Tibial artery (tissue), 4 donors: ENCODE measurements at regions of chr10 and their contacts with region 1.

Region 1: GRCh38 chr10:119207367-119207668 is at the start of gene GRK5:
- DNase-seq: peak; percentile 97 to 98
- H3K4me3 ChIP-seq: peak within 1 kb of the TSS; percentile 87 to 97
- H3K27ac ChIP-seq: peak within 1 kb of the TSS; percentile 87 to 90
- H3K4me1 ChIP-seq: peaks cover 0 to 38% (median 24%) of the 10 kb centered on the region in 4 donors
- H3K27me3 ChIP-seq: no peaks in the 10 kb centered on the region
- CTCF ChIP-seq: no peak

Region 2: GRCh38 chr10:119120413-119120867 is 86.9 kb before region 1 on chr10:
- intact Hi-C with region 1: no loop called
- DNase-seq: no peak
- H3K4me3 ChIP-seq: no peak overlapping the region
- H3K27ac ChIP-seq: no peak overlapping the region
- H3K4me1 ChIP-seq: no peaks in the 10 kb centered on the region
- H3K27me3 ChIP-seq: no peaks in the 10 kb centered on the region
- CTCF ChIP-seq: no peak

Region 3: GRCh38 chr10:119253433-119254174 is 46.3 kb after region 1 on chr10:
- intact Hi-C with region 1: loop called (anchors 5 kb)
- DNase-seq: peak; percentile 89 to 95
- H3K4me3 ChIP-seq: peak overlapping the region in 1 of 2 donors; percentile 3
- H3K27ac ChIP-seq: peak overlapping the region; percentile 85
- H3K4me1 ChIP-seq: peaks cover 0 to 80% (median 55%) of the 10 kb centered on the region in 4 donors
- H3K27me3 ChIP-seq: no peaks in the 10 kb centered on the region
- CTCF ChIP-seq: peak; percentile 19 to 23

Region 4: DNA sequence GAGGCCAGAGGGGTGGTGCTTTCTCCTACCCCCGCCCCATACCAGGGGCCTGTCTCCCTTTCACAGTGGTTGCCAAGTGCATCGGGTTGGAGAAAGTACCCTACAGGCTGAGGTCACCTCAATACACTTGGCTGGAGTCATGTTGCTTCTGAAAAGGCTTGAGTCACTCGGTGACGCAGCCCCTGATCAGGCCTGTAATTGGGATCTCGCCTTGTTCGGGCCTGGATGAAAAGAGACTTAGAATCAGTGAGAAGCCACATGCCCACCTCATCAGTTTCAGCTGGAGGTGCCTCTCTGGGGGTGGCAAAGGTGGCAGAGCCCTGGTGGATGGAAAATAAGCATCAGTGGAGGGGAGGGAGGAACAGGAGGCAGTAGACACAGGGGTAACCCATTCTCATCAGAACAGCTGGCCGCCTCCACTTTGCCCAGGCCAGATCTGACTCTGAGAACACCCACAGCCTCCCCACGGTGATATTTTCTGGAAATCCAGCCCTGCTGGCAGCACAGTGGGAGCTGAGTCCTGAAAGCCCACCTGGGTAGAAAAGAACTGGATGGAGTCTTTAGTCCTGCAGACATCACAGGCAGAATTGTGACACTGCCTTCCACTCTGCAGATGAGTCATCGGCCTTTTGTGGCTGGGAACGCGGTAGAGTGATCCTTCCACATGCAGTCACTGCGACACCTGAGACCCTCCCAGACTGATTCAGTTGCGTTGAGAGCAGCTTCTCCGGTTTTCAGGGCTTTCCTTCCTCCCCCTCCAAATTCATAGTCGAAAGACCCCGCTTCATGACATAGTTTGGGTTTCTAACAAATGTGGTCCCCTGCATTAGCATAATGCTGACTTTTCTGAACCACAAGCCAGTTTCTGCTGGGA is 108.0 kb after region 1 on chr10:
- intact Hi-C with region 1: loop called (anchors 5 kb)
- DNase-seq: peak; percentile 83 to 91
- H3K4me3 ChIP-seq: no peak overlapping the region
- H3K27ac ChIP-seq: peak overlapping the region; percentile 78 to 92
- H3K4me1 ChIP-seq: peaks cover 5 to 89% (median 56%) of the 10 kb centered on the region in 4 donors
- H3K27me3 ChIP-seq: no peaks in the 10 kb centered on the region
- CTCF ChIP-seq: no peak

Region 5: DNA sequence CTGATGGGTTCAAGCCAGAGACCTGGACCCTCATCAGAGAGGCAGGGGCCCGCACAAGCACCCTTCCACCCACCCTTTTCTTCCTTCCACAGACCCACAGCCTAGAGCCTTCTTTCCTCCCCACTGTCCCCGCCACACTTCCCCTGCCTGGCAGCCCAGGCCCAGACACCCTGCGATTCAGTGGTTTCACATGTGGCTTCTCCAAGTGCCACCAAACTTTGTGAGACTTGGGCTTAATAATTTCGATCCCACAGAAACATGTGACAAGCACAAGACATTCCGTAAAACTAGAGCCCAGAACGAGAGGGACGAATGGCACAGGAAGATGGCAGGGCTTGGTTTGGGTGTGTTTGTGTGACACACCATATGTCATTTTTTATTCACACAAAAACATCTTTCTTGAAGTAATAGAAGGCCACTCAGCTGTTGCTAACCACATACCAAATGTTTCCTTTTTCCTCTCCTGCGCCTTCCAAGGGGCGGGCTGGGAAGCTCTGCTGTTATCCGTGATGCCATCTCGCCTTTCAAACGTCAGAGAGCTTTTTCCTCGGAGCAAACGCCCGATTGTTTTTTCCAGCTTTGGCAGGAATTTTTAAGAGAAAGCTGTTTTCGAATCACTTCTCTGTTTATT is 162.9 kb after region 1 on chr10:
- intact Hi-C with region 1: loop called (anchors 5 kb)
- DNase-seq: peak in 1 of 2 donors; percentile 81
- H3K4me3 ChIP-seq: peak overlapping the region; percentile 6 to 38
- H3K27ac ChIP-seq: peak overlapping the region; percentile 67 to 73
- H3K4me1 ChIP-seq: peaks cover 0 to 79% (median 46%) of the 10 kb centered on the region in 4 donors
- H3K27me3 ChIP-seq: no peaks in the 10 kb centered on the region
- CTCF ChIP-seq: no peak

Region 6: GRCh38 chr10:119416855-119417254 is 209.5 kb after region 1 on chr10:
- intact Hi-C with region 1: loop called (anchors 10 kb)
- DNase-seq: peak in 1 of 2 donors; percentile 55
- H3K4me3 ChIP-seq: no peak overlapping the region
- H3K27ac ChIP-seq: no peak overlapping the region
- H3K4me1 ChIP-seq: peaks cover 0 to 39% (median 22%) of the 10 kb centered on the region in 4 donors
- H3K27me3 ChIP-seq: no peaks in the 10 kb centered on the region
- CTCF ChIP-seq: peak; percentile 54 to 60